IMR-90 (cell line): ENCODE measurements at regions of chrX and their contacts with region 1.

Region 1: DNA sequence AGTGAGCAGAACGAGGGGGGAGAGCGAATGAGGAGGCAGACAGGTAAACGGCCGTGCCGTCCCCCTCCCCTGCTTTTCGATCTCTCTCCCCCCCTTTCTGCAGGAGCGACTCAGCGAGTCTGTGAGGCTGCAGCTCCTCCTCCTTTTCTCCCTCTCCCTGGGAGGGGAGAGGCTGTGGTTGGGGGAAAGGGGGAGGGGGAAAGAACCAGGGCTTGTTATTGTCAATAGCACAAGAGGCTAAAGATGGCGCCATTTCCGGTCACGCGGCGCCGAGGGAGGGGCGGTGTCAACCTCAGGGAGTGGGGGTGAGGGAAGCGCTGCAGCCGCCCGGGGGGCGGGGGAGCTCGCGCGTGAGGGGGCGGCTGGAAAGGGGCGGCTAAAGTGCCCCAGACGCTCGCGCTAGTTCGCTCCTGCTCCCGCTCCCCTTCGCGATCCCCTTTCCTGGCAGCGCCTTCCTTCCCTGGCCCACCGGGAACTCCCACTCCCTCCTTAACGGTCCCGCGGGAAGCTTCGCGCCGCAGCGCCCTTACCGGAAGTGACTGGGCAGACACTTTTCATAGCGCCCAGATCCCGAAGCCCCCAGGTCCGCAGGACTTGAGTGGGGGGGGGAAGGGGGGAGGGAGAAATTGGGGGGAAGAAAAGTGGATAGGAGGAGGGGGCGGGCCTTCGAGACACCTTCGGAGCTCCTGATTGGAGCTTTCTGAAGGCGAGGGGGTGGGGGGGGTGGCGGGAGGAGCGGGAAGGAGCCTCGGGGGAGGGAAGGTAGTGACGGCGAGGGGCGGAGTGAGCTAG is at the start of gene CUL4B:
- DNase-seq: peak; percentile 94
- ATAC-seq: peak; percentile 86
- H3K4me3 ChIP-seq: peak within 1 kb of the TSS; percentile 99
- H3K27ac ChIP-seq: peak within 1 kb of the TSS; percentile 100
- H3K4me1 ChIP-seq: no peaks in the 10 kb centered on the region
- H3K27me3 ChIP-seq: no peaks in the 10 kb centered on the region
- CTCF ChIP-seq: no peak
- POLR2A ChIP-seq: peak; percentile 78; the same call in 1 of the 2 replicates
- RAD21 ChIP-seq: no peak
- total RNA-seq, gene CUL4B: 19.4 and 33.1 TPM in 2 replicates

Region 2: DNA sequence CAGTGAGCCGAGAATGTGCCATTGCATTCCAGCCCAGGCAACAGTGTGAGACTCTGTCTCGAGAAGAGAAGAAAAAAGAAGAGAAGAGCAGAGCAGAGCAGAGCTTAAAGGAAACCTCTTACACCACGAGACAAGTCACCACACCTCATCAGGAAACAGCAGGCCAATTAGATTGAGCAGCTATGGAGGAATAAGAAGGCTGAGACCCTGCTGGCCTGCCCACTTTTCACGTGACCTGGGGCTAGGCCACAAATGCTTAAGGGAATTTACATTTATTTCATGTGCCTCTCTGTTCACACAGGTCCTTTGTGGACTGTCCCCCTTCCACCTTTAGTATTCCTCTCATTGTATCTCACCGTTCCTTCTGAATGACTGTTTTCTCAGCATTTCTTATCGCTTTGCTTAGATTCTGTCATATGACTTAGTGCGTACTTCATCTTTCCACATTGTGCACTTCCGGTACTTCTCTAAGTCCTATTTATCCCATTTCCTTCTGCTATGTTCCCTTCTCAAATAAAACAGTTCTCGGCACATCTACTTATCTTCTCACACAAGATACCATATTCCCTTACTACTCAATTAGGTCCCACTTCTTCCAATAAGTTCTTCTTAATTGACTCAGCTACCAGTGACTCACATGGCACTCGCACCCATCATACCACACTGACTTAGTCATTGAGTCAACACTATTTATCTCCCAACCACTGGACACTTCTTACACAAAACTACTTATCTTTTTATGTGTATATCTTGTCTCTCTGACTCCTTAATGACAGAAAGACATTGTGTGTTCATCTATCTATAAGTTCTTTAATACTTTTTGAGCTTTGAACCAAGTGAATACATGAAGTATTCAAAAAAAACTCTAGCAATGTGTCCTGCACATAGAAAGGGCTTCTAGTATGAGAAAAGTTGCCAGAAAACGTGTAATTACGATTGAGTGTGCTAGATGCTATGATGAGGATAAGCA is 11.3 kb before region 1 on chrX:
- CTCF ChIA-PET with region 1: interaction called, 6 read pairs
- POLR2A ChIA-PET with region 1: interaction called, 4 read pairs
- dilution Hi-C with region 1: no loop called
- in situ Hi-C with region 1: no loop called
- intact Hi-C with region 1: loop called (anchors 1 kb)
- DNase-seq: peak; percentile 94
- ATAC-seq: peak; percentile 85
- H3K4me3 ChIP-seq: peak overlapping the region; percentile 24; the same call in 1 of the 2 replicates
- H3K27ac ChIP-seq: peak overlapping the region; percentile 97
- H3K4me1 ChIP-seq: peaks cover 10% of the 10 kb centered on the region
- H3K27me3 ChIP-seq: no peaks in the 10 kb centered on the region
- CTCF ChIP-seq: no peak
- POLR2A ChIP-seq: no peak
- RAD21 ChIP-seq: no peak

Region 3: GRCh38 chrX:120603707-120604360 is 42.8 kb after region 1 on chrX and contains the start of gene MCTS1:
- CTCF ChIA-PET with region 1: no interaction called
- POLR2A ChIA-PET with region 1: interaction called, 10 read pairs
- dilution Hi-C with region 1: no loop called
- in situ Hi-C with region 1: no loop called
- intact Hi-C with region 1: loop called (anchors 1 kb)
- DNase-seq: peak; percentile 96
- ATAC-seq: peak; percentile 95
- H3K4me3 ChIP-seq: peak within 1 kb of the TSS; percentile 88
- H3K27ac ChIP-seq: peak within 1 kb of the TSS; percentile 95
- H3K4me1 ChIP-seq: no peaks in the 10 kb centered on the region
- H3K27me3 ChIP-seq: no peaks in the 10 kb centered on the region
- CTCF ChIP-seq: no peak
- POLR2A ChIP-seq: peak; percentile 61; the same call in 1 of the 2 replicates
- RAD21 ChIP-seq: no peak
- total RNA-seq, gene MCTS1: 36.9 and 48.6 TPM in 2 replicates

Region 4: GRCh38 chrX:120629667-120630537 is 68.9 kb after region 1 on chrX and contains the start of gene C1GALT1C1:
- CTCF ChIA-PET with region 1: no interaction called
- POLR2A ChIA-PET with region 1: no interaction called
- dilution Hi-C with region 1: no loop called
- in situ Hi-C with region 1: no loop called
- intact Hi-C with region 1: loop called (anchors 2 kb)
- DNase-seq: peak; percentile 87
- ATAC-seq: peak; percentile 100
- H3K4me3 ChIP-seq: peak within 1 kb of the TSS; percentile 88
- H3K27ac ChIP-seq: peak within 1 kb of the TSS; percentile 76
- H3K4me1 ChIP-seq: no peaks in the 10 kb centered on the region
- H3K27me3 ChIP-seq: no peaks in the 10 kb centered on the region
- CTCF ChIP-seq: no peak
- POLR2A ChIP-seq: peak; percentile 25; the same call in 1 of the 2 replicates
- RAD21 ChIP-seq: no peak
- total RNA-seq, gene C1GALT1C1: 15.2 and 22.5 TPM in 2 replicates

Region 5: GRCh38 chrX:120638619-120639018 is 77.6 kb after region 1 on chrX:
- CTCF ChIA-PET with region 1: no interaction called
- POLR2A ChIA-PET with region 1: interaction called, 12 read pairs
- dilution Hi-C with region 1: no loop called
- in situ Hi-C with region 1: no loop called
- intact Hi-C with region 1: no loop called
- DNase-seq: no peak
- ATAC-seq: no peak
- H3K4me3 ChIP-seq: no peak overlapping the region
- H3K27ac ChIP-seq: no peak overlapping the region
- H3K4me1 ChIP-seq: no peaks in the 10 kb centered on the region
- H3K27me3 ChIP-seq: no peaks in the 10 kb centered on the region
- CTCF ChIP-seq: no peak
- POLR2A ChIP-seq: no peak
- RAD21 ChIP-seq: no peak

Region 6: GRCh38 chrX:120769576-120770341 is 208.7 kb after region 1 on chrX:
- CTCF ChIA-PET with region 1: no interaction called
- POLR2A ChIA-PET with region 1: no interaction called
- dilution Hi-C with region 1: no loop called
- in situ Hi-C with region 1: no loop called
- intact Hi-C with region 1: loop called (anchors 2 kb)
- DNase-seq: peak; percentile 19
- ATAC-seq: no peak
- H3K4me3 ChIP-seq: no peak overlapping the region
- H3K27ac ChIP-seq: no peak overlapping the region
- H3K4me1 ChIP-seq: no peaks in the 10 kb centered on the region
- H3K27me3 ChIP-seq: no peaks in the 10 kb centered on the region
- CTCF ChIP-seq: peak; percentile 31
- POLR2A ChIP-seq: no peak
- RAD21 ChIP-seq: peak; percentile 37